ENCODE measurements at regions of chr5 and their contacts with region 1.

Region 1: GRCh38 chr5:148912714-148913398 is 86.4 kb downstream of the ADRB2 start:
- DNase-seq: peak; percentile 98
- H3K4me3 Mint-ChIP-seq: peak overlapping the region; percentile 1
- H3K27ac Mint-ChIP-seq: peak overlapping the region; percentile 76
- H3K4me1 Mint-ChIP-seq: peaks cover 68% of the 10 kb centered on the region
- H3K27me3 Mint-ChIP-seq: no peaks in the 10 kb centered on the region
- CTCF ChIP-seq: peak; percentile 75

Region 2: DNA sequence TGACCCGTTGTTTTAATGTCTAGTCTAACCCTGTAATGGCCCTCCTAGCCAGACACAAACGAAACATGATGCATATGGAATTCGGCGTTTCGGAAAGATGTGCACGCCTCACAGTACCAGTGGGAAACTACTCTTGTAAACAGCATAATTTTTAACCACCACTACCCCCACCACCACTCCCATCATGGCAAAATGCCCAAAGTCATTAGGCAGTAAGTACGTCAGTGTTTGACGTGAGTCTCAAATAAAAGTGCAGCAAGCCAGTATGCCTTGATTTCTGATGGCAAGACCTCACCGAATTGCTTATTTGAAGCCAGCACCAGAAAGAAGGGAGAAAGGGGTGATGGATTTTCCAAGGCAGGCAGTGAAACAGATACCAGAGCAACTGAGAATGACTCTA is 15.0 kb before region 1 on chr5:
- CTCF ChIA-PET with region 1: interaction called, 8 read pairs
- POLR2A ChIA-PET with region 1: interaction called, 13 read pairs
- intact Hi-C with region 1: no loop called
- DNase-seq: no peak
- H3K4me3 Mint-ChIP-seq: no peak overlapping the region
- H3K27ac Mint-ChIP-seq: no peak overlapping the region
- H3K4me1 Mint-ChIP-seq: no peaks in the 10 kb centered on the region
- H3K27me3 Mint-ChIP-seq: no peaks in the 10 kb centered on the region
- CTCF ChIP-seq: no peak

Region 3: DNA sequence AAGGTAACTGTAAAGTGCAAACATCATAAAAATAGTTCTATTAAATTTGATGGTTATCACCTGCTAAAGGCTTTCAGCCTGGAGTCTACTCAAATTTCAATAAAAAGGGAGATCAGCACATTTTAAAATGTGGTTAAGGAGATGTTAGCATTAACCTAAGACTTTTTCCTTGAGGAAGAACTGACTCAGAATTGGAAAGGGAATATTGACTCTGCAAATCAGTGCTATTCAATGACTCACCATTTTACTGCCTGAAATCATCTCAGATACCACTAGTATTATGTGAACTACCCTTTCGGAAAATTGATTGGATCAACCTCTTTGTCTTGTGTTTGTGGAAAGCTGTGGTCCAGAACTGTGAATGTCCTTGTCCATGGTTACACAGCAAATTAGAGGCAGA is 26.8 kb after region 1 on chr5:
- CTCF ChIA-PET with region 1: interaction called, 29 read pairs
- POLR2A ChIA-PET with region 1: interaction called, 17 read pairs
- intact Hi-C with region 1: no loop called
- DNase-seq: peak; percentile 27
- H3K4me3 Mint-ChIP-seq: no peak overlapping the region
- H3K27ac Mint-ChIP-seq: no peak overlapping the region
- H3K4me1 Mint-ChIP-seq: peaks cover 32% of the 10 kb centered on the region
- H3K27me3 Mint-ChIP-seq: no peaks in the 10 kb centered on the region
- CTCF ChIP-seq: no peak

Region 4: DNA sequence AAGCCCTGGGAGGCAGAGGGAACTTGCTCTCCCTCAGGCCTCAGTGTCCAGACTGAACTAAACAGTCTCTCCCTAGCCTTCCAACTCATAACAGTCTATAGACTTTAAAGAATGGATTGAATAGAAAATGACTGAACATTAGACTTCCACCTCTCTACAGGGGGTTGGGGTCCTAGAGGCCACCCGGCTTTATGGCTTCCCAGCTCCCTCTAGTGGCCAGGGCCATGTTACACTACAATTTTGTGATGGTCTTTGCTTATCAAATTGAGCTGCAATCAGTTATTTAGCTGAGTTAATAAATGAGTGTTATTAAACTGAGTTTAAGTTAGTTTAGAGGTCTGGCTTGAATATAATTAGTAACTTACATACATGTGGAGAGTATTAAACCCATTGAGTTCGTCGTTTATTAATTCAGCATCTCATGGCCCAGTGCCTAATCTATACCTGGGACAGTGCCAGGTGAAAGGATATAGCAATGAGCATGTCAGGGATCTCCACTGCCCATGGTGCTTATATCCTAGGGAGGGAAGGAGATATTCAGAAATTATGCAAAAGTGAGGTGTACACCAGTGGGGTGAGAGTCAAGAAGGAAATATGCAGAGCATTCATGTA is 44.8 kb after region 1 on chr5:
- CTCF ChIA-PET with region 1: interaction called, 201 read pairs
- POLR2A ChIA-PET with region 1: interaction called, 175 read pairs
- intact Hi-C with region 1: loop called (anchors 1 kb)
- DNase-seq: peak; percentile 71
- H3K4me3 Mint-ChIP-seq: no peak overlapping the region
- H3K27ac Mint-ChIP-seq: no peak overlapping the region
- H3K4me1 Mint-ChIP-seq: peaks cover 24% of the 10 kb centered on the region
- H3K27me3 Mint-ChIP-seq: no peaks in the 10 kb centered on the region
- CTCF ChIP-seq: peak; percentile 99

Region 5: DNA sequence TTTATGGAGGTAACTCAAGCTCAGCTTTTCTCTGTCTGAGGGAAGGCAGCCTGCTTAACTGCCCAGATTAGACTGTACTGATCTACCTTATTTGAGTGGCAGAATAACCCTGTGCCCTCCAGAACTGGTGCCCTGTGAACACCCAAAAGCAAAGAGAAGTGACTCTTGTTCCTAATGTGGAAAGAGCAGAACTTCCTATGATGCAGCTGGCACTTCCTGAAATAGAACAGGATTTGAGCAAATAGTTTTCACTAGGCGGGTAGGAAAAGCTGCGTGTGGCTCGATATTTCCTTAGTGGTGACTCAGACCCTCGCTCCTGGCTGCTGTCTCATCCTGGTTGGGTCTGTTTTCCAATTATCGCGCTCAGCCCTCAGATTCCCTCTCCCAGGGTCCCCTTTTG is 60.1 kb after region 1 on chr5:
- CTCF ChIA-PET with region 1: interaction called, 76 read pairs
- POLR2A ChIA-PET with region 1: interaction called, 284 read pairs
- intact Hi-C with region 1: no loop called
- DNase-seq: peak; percentile 94
- H3K4me3 Mint-ChIP-seq: peak overlapping the region; percentile 28
- H3K27ac Mint-ChIP-seq: peak overlapping the region; percentile 93
- H3K4me1 Mint-ChIP-seq: peaks cover 88% of the 10 kb centered on the region
- H3K27me3 Mint-ChIP-seq: no peaks in the 10 kb centered on the region
- CTCF ChIP-seq: no peak

Region 6: DNA sequence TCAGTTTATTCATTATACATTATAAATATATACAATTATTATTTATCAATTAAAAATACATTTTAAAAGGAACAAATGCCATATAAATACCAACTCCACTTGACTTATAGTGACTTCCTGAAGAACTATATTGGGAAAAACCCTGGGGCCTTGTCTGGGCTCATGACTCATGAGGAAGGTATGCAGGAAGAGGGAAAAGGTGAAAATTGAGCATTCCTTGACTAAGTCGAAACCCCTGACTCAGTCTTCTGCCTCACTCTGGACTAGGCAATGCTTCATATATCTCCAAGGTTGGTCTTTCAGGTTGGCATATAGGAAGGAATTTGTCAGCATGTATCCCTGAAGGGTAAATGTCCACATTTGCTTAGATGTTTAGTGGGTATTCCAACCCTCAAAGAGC is 71.5 kb after region 1 on chr5:
- CTCF ChIA-PET with region 1: interaction called, 76 read pairs
- POLR2A ChIA-PET with region 1: interaction called, 284 read pairs
- intact Hi-C with region 1: no loop called
- DNase-seq: peak; percentile 89
- H3K4me3 Mint-ChIP-seq: no peak overlapping the region
- H3K27ac Mint-ChIP-seq: peak overlapping the region; percentile 95
- H3K4me1 Mint-ChIP-seq: peaks cover 68% of the 10 kb centered on the region
- H3K27me3 Mint-ChIP-seq: no peaks in the 10 kb centered on the region
- CTCF ChIP-seq: no peak

Region 7: GRCh38 chr5:149288436-149288835 is 375.6 kb after region 1 on chr5:
- CTCF ChIA-PET with region 1: no interaction called
- POLR2A ChIA-PET with region 1: no interaction called
- intact Hi-C with region 1: no loop called
- DNase-seq: no peak
- H3K4me3 Mint-ChIP-seq: no peak overlapping the region
- H3K27ac Mint-ChIP-seq: no peak overlapping the region
- H3K4me1 Mint-ChIP-seq: peaks cover 13% of the 10 kb centered on the region
- H3K27me3 Mint-ChIP-seq: no peaks in the 10 kb centered on the region
- CTCF ChIP-seq: no peak